Breast epithelium (tissue), 4 donors: ENCODE measurements at regions of chr6 and their contacts with region 1.

Region 1: DNA sequence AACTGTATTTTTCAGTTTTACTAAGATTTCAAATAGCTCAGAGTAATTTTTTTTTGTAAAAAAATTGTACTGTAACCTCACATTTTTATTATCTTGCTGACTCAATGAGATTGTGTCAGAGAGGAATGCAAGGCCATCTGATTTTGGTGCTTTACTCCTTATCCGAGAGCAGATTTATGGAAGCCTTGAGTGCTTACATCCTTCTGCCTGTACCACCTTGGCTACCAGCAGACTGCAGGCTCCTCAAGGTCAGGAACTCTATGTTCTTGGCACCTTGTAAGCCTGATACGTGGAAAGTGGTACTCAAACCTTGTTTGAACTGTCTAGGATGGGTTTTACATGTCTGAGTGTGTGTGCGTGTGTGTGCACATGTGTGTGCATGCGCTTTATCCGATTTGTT is 80.1 kb upstream of the MLIP start:
- DNase-seq: no peak
- H3K4me3 ChIP-seq: no peak overlapping the region
- H3K27ac ChIP-seq: no peak overlapping the region
- H3K4me1 ChIP-seq: no peaks in the 10 kb centered on the region
- H3K27me3 ChIP-seq: no peaks in the 10 kb centered on the region
- CTCF ChIP-seq: no peak
- POLR2A ChIP-seq: no peak

Region 2: DNA sequence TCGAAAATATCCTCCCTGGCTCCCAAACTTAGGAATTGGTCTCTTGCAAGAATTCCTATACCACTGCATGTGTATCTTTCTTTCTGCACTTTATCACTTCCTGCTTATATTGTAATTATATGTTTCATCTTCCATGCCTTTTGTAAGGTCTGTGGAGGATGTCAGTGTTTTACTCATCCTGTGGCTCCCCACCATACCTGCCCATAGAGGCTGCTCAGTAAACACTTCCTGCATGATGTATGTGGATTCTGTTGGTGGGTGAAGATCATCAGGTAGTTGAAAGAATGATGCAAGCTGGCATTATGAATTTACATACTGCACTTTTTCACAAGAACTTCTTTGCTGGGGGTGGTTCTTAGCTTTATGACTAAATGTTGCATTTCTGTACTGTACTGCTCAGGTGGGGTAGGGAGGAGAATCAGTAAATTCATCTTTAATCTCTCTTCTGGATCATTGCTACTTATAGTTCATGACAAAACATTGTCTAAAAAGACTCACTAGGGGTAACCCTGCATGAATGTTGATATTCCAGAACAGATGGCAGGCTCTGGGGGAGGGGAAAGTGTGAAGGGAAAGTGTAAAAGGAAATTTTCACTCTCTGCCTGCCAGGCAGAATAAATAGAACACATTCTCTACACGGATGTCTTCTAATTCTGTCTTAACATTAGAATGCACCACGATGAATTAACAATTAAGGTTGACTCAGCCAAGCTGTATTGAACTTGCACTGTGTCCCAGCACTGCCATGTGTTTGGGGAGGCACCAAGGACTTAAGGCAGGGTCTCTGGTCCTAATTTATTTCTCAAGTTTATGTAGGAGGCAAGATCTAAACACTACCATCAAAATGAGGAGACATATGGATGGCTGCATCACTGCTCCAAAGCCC is 329.6 kb before region 1 on chr6:
- intact Hi-C with region 1: no loop called
- DNase-seq: no peak
- H3K4me3 ChIP-seq: no peak overlapping the region
- H3K27ac ChIP-seq: no peak overlapping the region
- H3K4me1 ChIP-seq: no peaks in the 10 kb centered on the region
- H3K27me3 ChIP-seq: no peaks in the 10 kb centered on the region
- CTCF ChIP-seq: no peak
- POLR2A ChIP-seq: no peak

Region 3: GRCh38 chr6:54020334-54020733 is 10.8 kb before region 1 on chr6:
- intact Hi-C with region 1: loop called (anchors 1 kb)
- DNase-seq: no peak
- H3K4me3 ChIP-seq: no peak overlapping the region
- H3K27ac ChIP-seq: no peak overlapping the region
- H3K4me1 ChIP-seq: no peaks in the 10 kb centered on the region
- H3K27me3 ChIP-seq: no peaks in the 10 kb centered on the region
- CTCF ChIP-seq: no peak
- POLR2A ChIP-seq: no peak

Region 4: GRCh38 chr6:54267798-54268197 is 236.6 kb after region 1 on chr6:
- intact Hi-C with region 1: no loop called
- DNase-seq: no peak
- H3K4me3 ChIP-seq: no peak overlapping the region
- H3K27ac ChIP-seq: no peak overlapping the region
- H3K4me1 ChIP-seq: no peaks in the 10 kb centered on the region
- H3K27me3 ChIP-seq: no peaks in the 10 kb centered on the region
- CTCF ChIP-seq: peak in 1 of 3 donors; percentile 15
- POLR2A ChIP-seq: no peak